ENCODE measurements at regions of chr1 and their contacts with region 1.

Region 1: GRCh38 chr1:44377925-44378784 is 23.1 kb upstream of the ERI3 start:
- DNase-seq: no peak
- ATAC-seq: peak; percentile 76
- H3K4me3 ChIP-seq: no peak overlapping the region
- H3K27ac ChIP-seq: no peak overlapping the region
- H3K4me1 ChIP-seq: no peaks in the 10 kb centered on the region
- H3K27me3 ChIP-seq: no peaks in the 10 kb centered on the region; a peak in 1 of 4 replicates
- CTCF ChIP-seq: peak; percentile 61 to 72 (median 64)
- EP300 ChIP-seq: no peak
- POLR2A ChIP-seq: no peak
- RAD21 ChIP-seq: peak; percentile 74

Region 2: DNA sequence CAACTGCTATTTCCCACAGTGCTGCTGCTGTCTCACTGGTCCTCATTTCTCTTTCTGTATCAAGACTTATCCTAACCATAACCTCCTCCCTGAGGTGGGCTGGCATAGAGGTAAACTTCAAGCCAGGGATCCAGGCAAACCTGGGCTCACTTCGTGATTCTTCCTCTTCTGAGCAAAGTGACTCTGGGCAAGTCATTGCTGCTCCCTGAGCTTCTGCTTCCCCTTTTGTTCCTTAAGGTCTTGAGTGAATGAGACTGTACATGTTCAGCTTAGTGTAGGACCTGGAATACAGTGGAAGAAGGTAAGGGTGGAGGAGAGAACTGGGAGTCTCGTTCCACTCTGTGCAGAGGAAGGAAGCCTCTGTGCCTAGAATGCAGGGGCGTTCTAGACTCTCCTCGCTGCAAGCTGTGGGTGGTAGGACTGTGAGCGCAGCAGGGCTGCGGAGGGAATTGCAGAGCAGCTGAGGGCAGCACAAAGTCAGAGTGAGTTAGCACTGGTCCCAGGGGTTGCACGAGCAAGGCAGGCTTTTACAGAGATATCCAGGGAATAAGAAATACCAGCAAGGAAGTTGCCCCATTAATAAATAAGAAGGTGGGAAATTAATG is 11.7 kb before region 1 on chr1:
- CTCF ChIA-PET with region 1: interaction called, 10 read pairs
- POLR2A ChIA-PET with region 1: no interaction called
- RAD21 ChIA-PET with region 1: no interaction called
- SMC1A ChIA-PET with region 1: no interaction called
- in situ Hi-C with region 1: no loop called
- intact Hi-C with region 1: no loop called
- DNase-seq: no peak
- ATAC-seq: no peak
- H3K4me3 ChIP-seq: no peak overlapping the region
- H3K27ac ChIP-seq: no peak overlapping the region
- H3K4me1 ChIP-seq: peaks cover 4% of the 10 kb centered on the region; the same call in 1 of the 2 replicates
- H3K27me3 ChIP-seq: peaks cover 0 to 1% of the 10 kb centered on the region in 2 experiments; a peak in 1 of 4 replicates
- CTCF ChIP-seq: no peak
- EP300 ChIP-seq: no peak
- POLR2A ChIP-seq: no peak
- RAD21 ChIP-seq: no peak

Region 3: GRCh38 chr1:44390277-44390676 is 12.1 kb after region 1 on chr1:
- CTCF ChIA-PET with region 1: interaction called, 11 read pairs
- POLR2A ChIA-PET with region 1: no interaction called
- RAD21 ChIA-PET with region 1: no interaction called
- SMC1A ChIA-PET with region 1: interaction called, 10 read pairs
- in situ Hi-C with region 1: no loop called
- intact Hi-C with region 1: no loop called
- DNase-seq: no peak
- ATAC-seq: no peak
- H3K4me3 ChIP-seq: no peak overlapping the region
- H3K27ac ChIP-seq: no peak overlapping the region
- H3K4me1 ChIP-seq: no peaks in the 10 kb centered on the region
- H3K27me3 ChIP-seq: peaks cover 0 to 3% of the 10 kb centered on the region in 2 experiments; a peak in 1 of 4 replicates
- CTCF ChIP-seq: no peak
- EP300 ChIP-seq: no peak
- POLR2A ChIP-seq: no peak
- RAD21 ChIP-seq: no peak